ENCODE measurements at regions of chr2 and their contacts with region 1.

Region 1: DNA sequence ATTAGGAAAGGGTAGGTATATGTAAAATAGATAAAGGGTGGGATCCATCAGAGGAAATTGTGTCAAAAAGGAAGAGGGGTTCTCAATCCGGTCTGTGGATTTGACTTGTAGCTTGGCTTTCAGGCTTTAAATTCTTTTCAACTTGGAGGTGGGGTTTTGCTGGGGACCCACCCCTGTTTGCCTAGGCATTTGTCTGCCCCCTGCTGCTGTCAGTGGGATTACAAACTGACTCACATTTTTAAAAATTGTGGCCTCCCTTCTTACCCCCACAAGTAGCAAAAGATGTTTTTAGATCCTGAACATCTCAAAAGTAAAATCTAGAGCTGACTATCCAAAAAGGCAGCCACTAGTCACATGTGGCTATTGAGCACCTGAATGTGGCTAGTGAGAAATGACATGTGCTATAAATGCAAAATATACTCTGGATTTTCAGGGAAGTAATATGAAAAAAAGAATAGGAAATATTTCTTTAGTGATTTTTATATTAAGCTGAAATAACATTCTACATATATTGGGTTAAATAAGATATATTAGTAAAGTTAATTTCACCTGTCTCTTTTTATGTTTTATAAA is 178.9 kb downstream of the GFPT1 start:
- DNase-seq: no peak
- ATAC-seq: no peak
- H3K4me3 ChIP-seq: no peak overlapping the region
- H3K27ac ChIP-seq: no peak overlapping the region
- H3K4me1 ChIP-seq: peaks cover 43% of the 10 kb centered on the region
- H3K27me3 ChIP-seq: no peaks in the 10 kb centered on the region
- CTCF ChIP-seq: peak; percentile 30; the same call in 1 of the 2 replicates
- EP300 ChIP-seq: no peak
- POLR2A ChIP-seq: no peak
- RAD21 ChIP-seq: 0 out of 2 replicates have a peak, but pooled peaks have one; percentile 17

Region 2: DNA sequence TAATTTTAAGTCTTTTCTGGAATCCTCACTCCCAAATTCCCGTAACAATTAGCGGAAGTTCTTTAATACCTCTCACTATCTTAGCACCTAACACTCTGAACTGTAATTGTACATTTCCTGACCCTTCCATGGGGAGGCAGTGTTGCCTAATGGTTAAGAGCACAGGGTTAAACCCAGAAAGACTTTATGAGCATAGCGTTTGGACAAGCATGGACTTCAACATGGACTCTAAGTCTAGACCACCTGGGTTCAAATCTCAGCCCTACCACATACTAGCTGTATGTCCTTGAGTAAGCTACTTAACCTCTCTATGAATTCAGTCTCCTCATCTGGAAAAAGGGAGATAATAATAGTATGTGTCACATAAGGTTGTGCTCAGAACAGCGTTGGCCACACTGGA is 182.1 kb before region 1 on chr2:
- CTCF ChIA-PET with region 1: no interaction called
- POLR2A ChIA-PET with region 1: no interaction called
- in situ Hi-C with region 1: no loop called
- intact Hi-C with region 1: loop called (anchors 1 kb)
- DNase-seq: peak; percentile 78
- ATAC-seq: peak; percentile 91
- H3K4me3 ChIP-seq: no peak overlapping the region
- H3K27ac ChIP-seq: no peak overlapping the region
- H3K4me1 ChIP-seq: peaks cover 24% of the 10 kb centered on the region
- H3K27me3 ChIP-seq: no peaks in the 10 kb centered on the region
- CTCF ChIP-seq: peak; percentile 92
- EP300 ChIP-seq: no peak
- POLR2A ChIP-seq: no peak
- RAD21 ChIP-seq: peak; percentile 93

Region 3: GRCh38 chr2:69518841-69519240 is 310.7 kb after region 1 on chr2:
- CTCF ChIA-PET with region 1: no interaction called
- POLR2A ChIA-PET with region 1: no interaction called
- in situ Hi-C with region 1: no loop called
- intact Hi-C with region 1: no loop called
- DNase-seq: no peak
- ATAC-seq: no peak
- H3K4me3 ChIP-seq: no peak overlapping the region
- H3K27ac ChIP-seq: no peak overlapping the region
- H3K4me1 ChIP-seq: peaks cover 12% of the 10 kb centered on the region
- H3K27me3 ChIP-seq: no peaks in the 10 kb centered on the region
- CTCF ChIP-seq: no peak
- EP300 ChIP-seq: no peak
- POLR2A ChIP-seq: no peak
- RAD21 ChIP-seq: no peak